Activated B cell treated with CpG ODN at 0.5 μM for 24 hours (primary cell): ENCODE measurements at regions of chr14 and their contacts with region 1.

Region 1: GRCh38 chr14:51846631-51847488 is 13.6 kb upstream of the GNG2 start:
- DNase-seq: peak; percentile 67
- ATAC-seq: peak; percentile 78
- H3K4me3 Mint-ChIP-seq: peak overlapping the region; percentile 88
- H3K27ac Mint-ChIP-seq: peak overlapping the region; percentile 99
- H3K4me1 Mint-ChIP-seq: peaks cover 86% of the 10 kb centered on the region
- H3K27me3 Mint-ChIP-seq: no peaks in the 10 kb centered on the region
- CTCF ChIP-seq: no peak

Region 2: DNA sequence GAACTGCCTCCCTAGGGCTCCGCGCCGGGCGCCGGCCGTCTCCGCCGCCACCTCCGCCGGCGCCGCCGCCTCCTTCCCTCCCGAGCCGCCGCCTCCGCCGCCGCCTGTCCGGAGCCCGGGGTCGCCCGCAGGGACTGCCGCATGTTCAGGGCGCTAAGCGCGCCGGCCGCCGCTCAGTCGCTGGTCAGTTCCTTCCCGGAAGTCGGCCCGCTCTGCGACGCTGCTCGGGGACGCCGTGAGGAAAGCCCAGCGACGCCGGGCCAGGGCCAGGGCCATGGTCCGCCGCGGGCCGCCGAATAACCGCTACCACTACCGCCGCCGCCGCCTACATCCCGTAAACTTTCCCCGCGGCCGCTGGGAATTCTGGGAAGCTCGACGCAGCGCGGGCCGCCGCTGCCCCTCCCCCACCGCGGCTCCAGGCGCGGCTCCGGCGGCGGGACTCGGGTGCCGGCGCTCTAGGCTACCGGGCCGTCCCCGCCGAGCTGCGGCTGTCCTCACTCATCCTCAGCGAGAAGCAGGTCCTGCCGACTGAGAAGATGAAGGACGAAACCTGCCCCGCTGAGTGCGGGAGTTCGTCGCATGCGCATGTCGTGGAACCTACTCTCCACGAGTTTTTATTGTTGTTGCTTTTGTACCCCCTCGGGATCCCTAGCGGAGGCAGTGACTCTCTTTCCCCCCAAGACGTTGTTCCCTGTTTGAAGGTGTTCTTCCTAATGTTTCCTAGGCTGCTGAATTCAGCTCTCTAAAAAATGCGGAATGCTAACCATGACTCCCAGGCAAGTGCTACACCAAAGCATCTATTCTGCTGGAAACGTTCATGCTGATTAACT is 1178.6 kb before region 1 on chr14 and contains the start of gene SAV1:
- CTCF ChIA-PET with region 1: no interaction called
- POLR2A ChIA-PET with region 1: no interaction called
- intact Hi-C with region 1: loop called (anchors 10 kb)
- DNase-seq: peak; percentile 63
- ATAC-seq: peak; percentile 65
- H3K4me3 Mint-ChIP-seq: no peak within 1 kb of the TSS
- H3K27ac Mint-ChIP-seq: no peak within 1 kb of the TSS
- H3K4me1 Mint-ChIP-seq: peaks cover 32% of the 10 kb centered on the region
- H3K27me3 Mint-ChIP-seq: no peaks in the 10 kb centered on the region
- CTCF ChIP-seq: no peak
- total RNA-seq, gene SAV1: 31.0 and 33.3 TPM in 2 replicates

Region 3: DNA sequence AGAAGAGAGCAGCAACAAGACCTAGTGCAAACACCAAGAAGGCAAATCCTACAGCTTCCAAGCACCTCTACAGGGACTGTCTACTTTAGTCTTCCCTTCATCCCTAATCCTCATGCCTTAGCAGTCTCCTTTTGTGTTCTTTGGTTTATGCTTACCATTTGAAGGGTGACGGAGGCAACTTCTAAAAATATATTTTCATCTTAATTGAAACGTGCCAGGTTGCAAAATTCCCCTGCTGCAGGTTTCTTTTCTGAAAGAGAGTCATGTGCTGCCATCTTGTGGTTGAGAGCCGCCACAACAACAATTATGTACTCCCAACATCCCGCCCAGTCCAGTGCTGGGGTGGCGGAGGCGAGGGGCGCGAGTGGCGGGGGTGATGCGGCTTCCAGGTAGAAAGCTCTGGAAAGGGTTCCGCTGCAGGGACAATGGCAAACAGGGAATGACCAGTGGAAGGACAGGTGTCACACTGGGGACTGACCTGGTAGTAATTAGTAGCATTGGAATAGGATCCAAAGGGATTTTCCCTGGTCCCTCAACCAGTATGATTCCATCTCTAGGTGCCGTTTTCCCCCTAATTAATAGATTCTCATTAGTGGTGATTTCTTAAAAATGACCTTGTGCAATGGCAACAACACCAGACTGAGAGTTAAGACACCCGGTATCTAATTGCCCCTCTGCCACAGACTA is 66.7 kb before region 1 on chr14:
- CTCF ChIA-PET with region 1: no interaction called
- POLR2A ChIA-PET with region 1: no interaction called
- intact Hi-C with region 1: loop called (anchors 1 kb)
- DNase-seq: peak; percentile 46
- ATAC-seq: peak; percentile 85
- H3K4me3 Mint-ChIP-seq: no peak overlapping the region
- H3K27ac Mint-ChIP-seq: no peak overlapping the region
- H3K4me1 Mint-ChIP-seq: peaks cover 9% of the 10 kb centered on the region
- H3K27me3 Mint-ChIP-seq: peaks cover 21% of the 10 kb centered on the region
- CTCF ChIP-seq: peak; percentile 89

Region 4: GRCh38 chr14:51865953-51866747 is 19.3 kb after region 1 on chr14:
- CTCF ChIA-PET with region 1: interaction called, 4 read pairs
- POLR2A ChIA-PET with region 1: interaction called, 143 read pairs
- intact Hi-C with region 1: loop called (anchors 1 kb)
- DNase-seq: no peak
- ATAC-seq: peak; percentile 71
- H3K4me3 Mint-ChIP-seq: no peak overlapping the region
- H3K27ac Mint-ChIP-seq: no peak overlapping the region
- H3K4me1 Mint-ChIP-seq: peaks cover 36% of the 10 kb centered on the region
- H3K27me3 Mint-ChIP-seq: no peaks in the 10 kb centered on the region
- CTCF ChIP-seq: no peak

Region 5: GRCh38 chr14:51901475-51902024 is 54.7 kb after region 1 on chr14:
- CTCF ChIA-PET with region 1: interaction called, 7 read pairs
- POLR2A ChIA-PET with region 1: interaction called, 13 read pairs
- intact Hi-C with region 1: loop called (anchors 1 kb)
- DNase-seq: no peak
- ATAC-seq: no peak
- H3K4me3 Mint-ChIP-seq: no peak overlapping the region
- H3K27ac Mint-ChIP-seq: peak overlapping the region; percentile 5
- H3K4me1 Mint-ChIP-seq: peaks cover 49% of the 10 kb centered on the region
- H3K27me3 Mint-ChIP-seq: no peaks in the 10 kb centered on the region
- CTCF ChIP-seq: no peak

Region 6: DNA sequence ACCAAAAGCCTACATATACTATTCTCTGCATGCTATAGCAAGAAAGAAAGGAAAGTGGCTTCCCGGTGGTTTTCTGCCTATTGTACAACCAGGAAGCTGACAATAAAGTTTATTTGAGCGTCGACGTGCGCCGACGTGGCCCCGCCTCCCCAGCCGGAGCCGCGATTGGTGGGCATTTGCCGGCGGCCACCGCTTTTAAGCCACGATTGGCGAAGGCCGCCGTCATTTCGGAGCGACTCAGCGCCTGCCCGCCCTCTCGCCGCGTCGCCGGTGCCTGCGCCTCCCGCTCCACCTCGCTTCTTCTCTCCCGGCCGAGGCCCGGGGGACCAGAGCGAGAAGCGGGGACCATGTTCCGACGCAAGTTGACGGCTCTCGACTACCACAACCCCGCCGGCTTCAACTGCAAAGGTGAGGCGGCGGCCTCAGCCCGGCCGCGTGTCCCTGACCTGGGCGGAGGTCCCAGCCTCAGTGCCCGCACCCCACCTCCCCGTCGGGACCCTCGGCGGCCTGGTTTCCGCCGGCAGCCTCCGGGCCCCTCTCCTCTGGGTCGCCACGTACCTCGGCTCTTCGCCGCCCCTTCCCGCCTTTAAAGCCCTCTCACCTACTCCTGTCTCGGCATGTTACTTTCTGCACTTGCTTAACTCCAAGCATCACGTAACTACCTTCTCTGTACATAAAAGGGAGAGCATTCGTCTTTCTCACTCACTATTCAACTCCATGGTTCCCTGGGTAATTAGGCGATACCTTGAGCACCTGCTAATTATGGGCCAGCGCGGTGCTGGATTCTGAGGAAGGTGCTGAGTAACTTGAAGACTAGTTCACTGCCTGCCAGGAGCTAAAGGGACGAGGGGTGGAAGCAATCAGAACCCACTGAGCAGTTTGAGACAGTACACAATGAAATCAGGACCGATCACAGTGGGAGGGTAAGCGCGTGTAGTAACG is 142.7 kb after region 1 on chr14 and contains the start of gene RTRAF:
- CTCF ChIA-PET with region 1: no interaction called
- POLR2A ChIA-PET with region 1: interaction called, 4 read pairs
- intact Hi-C with region 1: loop called (anchors 1 kb)
- DNase-seq: peak; percentile 86
- ATAC-seq: peak; percentile 97
- H3K4me3 Mint-ChIP-seq: peak within 1 kb of the TSS; percentile 98
- H3K27ac Mint-ChIP-seq: peak within 1 kb of the TSS; percentile 93
- H3K4me1 Mint-ChIP-seq: peaks cover 37% of the 10 kb centered on the region
- H3K27me3 Mint-ChIP-seq: no peaks in the 10 kb centered on the region
- CTCF ChIP-seq: no peak
- total RNA-seq, gene RTRAF: 160 and 163 TPM in 2 replicates

Region 7: DNA sequence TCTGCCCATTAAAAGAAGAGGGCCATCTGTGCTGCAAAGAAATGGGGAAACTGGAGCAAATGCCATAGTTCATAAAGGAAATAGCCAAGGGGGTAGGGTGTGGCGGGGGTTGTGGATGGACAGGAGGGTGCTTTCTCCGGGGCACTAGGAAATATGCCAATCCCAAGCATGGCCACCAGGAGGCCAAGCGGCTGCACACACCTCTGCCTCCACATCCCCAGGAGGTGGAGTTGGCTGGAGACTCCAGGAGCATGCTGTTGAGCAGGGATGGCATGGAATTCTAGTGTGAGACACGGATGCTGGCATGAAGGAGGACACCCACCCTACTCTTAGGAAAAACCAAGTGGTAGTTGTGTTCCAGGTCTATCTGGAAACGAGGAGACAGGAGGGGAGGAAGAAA is 196.8 kb after region 1 on chr14:
- CTCF ChIA-PET with region 1: no interaction called
- POLR2A ChIA-PET with region 1: no interaction called
- intact Hi-C with region 1: no loop called
- DNase-seq: no peak
- ATAC-seq: no peak
- H3K4me3 Mint-ChIP-seq: no peak overlapping the region
- H3K27ac Mint-ChIP-seq: no peak overlapping the region
- H3K4me1 Mint-ChIP-seq: peaks cover 29% of the 10 kb centered on the region
- H3K27me3 Mint-ChIP-seq: peaks cover 8% of the 10 kb centered on the region
- CTCF ChIP-seq: no peak

Region 8: DNA sequence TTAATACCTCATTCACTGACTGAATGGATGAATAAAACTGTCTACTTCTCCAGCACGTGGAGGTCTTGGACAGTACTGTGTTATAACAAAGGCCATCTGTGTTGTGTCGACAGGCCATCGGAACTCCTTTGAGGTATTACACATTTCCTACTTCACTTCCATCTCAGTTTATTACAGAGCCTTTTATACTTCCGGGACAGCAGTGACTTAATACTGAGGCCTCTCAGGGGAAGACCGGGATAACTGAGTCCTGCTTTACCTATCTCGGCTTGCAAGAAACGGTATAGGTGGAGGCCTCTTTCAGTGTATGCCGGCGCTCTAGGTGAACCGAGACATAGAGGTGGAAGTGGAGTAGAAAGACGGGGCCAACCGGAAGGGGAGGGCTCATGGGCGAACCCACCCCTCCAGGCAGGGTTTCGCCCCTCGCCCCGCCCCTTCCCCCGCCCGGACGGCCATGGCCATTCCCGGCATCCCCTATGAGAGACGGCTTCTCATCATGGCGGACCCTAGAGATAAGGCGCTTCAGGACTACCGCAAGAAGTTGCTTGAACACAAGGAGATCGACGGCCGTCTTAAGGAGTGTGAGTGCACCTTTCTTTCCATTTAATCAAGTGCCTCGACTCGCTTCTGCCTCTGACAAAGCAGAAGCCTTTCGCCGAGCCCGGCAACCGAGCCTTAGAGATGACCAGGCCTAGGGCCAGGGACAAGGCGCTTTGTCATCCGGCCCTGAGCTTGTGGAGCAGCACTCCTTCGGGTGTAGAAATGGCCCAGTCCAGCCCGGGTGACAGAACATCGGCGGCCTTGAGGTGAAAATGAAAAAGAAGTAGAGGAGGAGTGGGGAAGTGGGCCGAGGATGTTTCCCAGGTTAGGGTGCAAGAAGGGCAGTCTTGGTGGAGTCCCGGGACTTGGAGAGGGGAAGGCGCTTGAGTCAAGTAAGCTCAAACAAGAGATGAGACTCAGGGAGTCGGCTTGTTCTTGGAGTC is 860.2 kb after region 1 on chr14 and contains the start of gene PSMC6:
- CTCF ChIA-PET with region 1: no interaction called
- POLR2A ChIA-PET with region 1: no interaction called
- intact Hi-C with region 1: loop called (anchors 5 kb)
- DNase-seq: peak; percentile 85
- ATAC-seq: peak; percentile 99
- H3K4me3 Mint-ChIP-seq: peak within 1 kb of the TSS; percentile 99
- H3K27ac Mint-ChIP-seq: peak within 1 kb of the TSS; percentile 98
- H3K4me1 Mint-ChIP-seq: peaks cover 25% of the 10 kb centered on the region
- H3K27me3 Mint-ChIP-seq: peaks cover 2% of the 10 kb centered on the region
- CTCF ChIP-seq: no peak
- total RNA-seq, gene PSMC6: 94.8 and 97.6 TPM in 2 replicates